ENCODE measurements at regions of chr15 and their contacts with region 1.

Region 1: DNA sequence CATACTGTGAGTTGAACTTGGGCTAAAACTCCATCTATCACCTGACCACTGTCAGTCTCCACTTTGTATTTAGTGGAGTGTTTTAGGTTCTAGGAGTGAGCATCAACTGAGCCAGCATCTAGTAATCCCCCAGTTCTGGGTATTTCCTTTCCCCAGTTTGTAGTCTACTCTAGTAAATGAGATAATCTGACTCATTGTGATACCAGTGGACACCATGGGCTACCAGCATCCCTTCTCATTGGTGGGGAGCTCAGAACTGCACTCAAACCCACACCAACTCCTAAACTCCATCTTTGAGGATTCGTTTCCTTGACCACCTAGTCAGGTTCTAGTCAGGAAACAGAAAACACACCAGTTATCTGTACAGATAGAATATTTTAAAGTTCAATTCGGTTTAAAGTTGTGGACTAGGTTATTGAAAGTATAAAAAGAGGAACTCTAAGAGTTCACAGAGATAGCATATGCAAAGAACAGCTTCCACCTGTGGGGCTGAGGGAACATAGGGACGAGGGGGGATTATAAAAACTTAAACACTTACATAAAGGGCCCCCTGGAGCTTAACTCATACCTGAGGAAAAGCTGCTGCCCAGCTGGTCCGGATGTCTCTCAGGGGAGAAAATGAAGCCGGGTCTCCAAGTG is 36.0 kb downstream of the LEO1 start:
- DNase-seq: no peak
- ATAC-seq: no peak
- H3K4me3 ChIP-seq: no peak overlapping the region
- H3K27ac ChIP-seq: no peak overlapping the region
- H3K4me1 ChIP-seq: no peaks in the 10 kb centered on the region
- H3K27me3 ChIP-seq: no peaks in the 10 kb centered on the region

Region 2: DNA sequence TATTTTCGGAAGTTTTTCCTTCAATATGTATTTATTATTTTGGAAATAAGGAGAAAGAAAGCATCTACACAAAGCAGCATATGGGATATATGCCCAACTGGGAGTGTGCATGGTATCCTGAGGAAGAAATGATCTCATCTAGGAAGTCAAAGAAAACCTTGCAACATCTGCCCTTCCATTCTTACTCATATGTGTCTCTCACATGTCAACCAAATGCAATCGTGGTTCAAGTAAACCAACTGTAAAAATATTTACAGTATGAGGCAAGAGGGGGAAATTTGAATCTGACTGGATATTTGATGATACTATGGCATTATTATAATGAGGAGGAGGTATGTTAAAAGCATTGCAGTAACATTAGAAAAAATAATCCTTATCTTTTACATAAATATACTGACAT is 257.5 kb before region 1 on chr15:
- intact Hi-C with region 1: loop called in 1 of 2 experiments (anchors 5 kb)
- DNase-seq: no peak
- ATAC-seq: no peak
- H3K4me3 ChIP-seq: no peak overlapping the region
- H3K27ac ChIP-seq: no peak overlapping the region
- H3K4me1 ChIP-seq: no peaks in the 10 kb centered on the region
- H3K27me3 ChIP-seq: no peaks in the 10 kb centered on the region

Measured in aorta (tissue), 5 donors.